Transverse colon (tissue), 4 donors: ENCODE measurements at regions of chr12 and their contacts with region 1.

Region 1: GRCh38 chr12:92649511-92650227 is 53.1 kb upstream of the PLEKHG7 start:
- DNase-seq: peak; percentile 55
- H3K4me3 ChIP-seq: no peak overlapping the region
- H3K27ac ChIP-seq: no peak overlapping the region
- H3K4me1 ChIP-seq: peaks cover 0 to 7% (median 0%) of the 10 kb centered on the region in 4 donors
- H3K27me3 ChIP-seq: no peaks in the 10 kb centered on the region
- CTCF ChIP-seq: peak; percentile 63 to 80 (median 65)
- EP300 ChIP-seq: no peak
- POLR2A ChIP-seq: no peak

Region 2: DNA sequence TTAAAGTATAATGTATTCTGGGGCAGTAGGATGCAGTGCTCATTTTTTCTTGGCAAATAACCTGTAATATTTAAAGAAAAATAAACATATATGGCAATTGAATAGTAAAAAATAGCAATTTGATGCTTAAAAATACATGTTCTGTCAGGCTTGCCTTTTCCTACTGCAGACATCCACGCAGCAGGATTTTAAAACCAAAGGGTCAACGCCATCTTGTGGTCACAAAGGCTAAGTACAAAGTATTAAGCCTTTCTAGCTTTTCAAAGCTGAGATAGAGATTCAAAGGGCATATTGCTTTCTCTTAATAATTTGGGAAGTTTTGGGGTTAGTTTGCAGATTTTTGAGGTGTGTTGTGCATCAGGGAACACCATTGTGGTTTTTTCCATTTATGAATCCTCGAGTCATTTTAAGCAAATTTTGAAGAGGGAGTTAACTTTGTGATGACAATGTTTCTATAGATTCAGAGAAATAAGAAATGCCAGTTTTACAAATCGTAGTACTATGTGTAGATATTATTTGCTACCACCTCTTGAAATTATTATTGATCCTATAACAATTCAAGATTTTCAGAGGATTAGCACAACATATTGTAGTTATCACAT is 1690.0 kb before region 1 on chr12:
- in situ Hi-C with region 1: loop called in 1 of 4 experiments (anchors 25 kb)
- intact Hi-C with region 1: no loop called
- DNase-seq: no peak
- H3K4me3 ChIP-seq: no peak overlapping the region
- H3K27ac ChIP-seq: no peak overlapping the region
- H3K4me1 ChIP-seq: no peaks in the 10 kb centered on the region
- H3K27me3 ChIP-seq: no peaks in the 10 kb centered on the region
- CTCF ChIP-seq: peak; percentile 30 to 66 (median 59)
- EP300 ChIP-seq: no peak
- POLR2A ChIP-seq: no peak

Region 3: GRCh38 chr12:91355150-91356006 is 1294.3 kb before region 1 on chr12:
- in situ Hi-C with region 1: loop called in 3 of 4 experiments (anchors 10 to 25 kb)
- intact Hi-C with region 1: loop called (anchors 10 kb)
- DNase-seq: peak; percentile 73
- H3K4me3 ChIP-seq: no peak overlapping the region
- H3K27ac ChIP-seq: no peak overlapping the region
- H3K4me1 ChIP-seq: peaks cover 0 to 18% (median 3%) of the 10 kb centered on the region in 4 donors
- H3K27me3 ChIP-seq: no peaks in the 10 kb centered on the region
- CTCF ChIP-seq: peak; percentile 79 to 87 (median 79)
- EP300 ChIP-seq: no peak
- POLR2A ChIP-seq: no peak

Region 4: DNA sequence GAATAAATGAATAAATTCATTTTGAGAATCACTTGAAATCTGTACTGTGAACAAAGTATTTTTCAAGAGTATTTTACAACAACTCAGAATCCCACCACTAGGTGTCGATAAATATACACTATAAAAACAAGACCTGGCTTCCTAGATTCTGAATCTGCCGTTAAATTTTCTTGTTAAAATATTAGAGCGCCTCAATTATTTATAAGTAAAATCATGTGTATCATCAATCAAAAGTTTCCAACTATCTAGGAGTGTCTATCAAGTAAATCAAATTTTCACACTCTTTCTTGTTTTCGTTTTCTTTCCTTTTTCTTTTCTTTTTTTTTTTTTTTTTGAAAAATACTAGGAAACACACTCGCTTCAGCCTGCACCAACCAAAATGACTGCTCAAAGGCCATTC is 1287.8 kb before region 1 on chr12:
- in situ Hi-C with region 1: loop called in 3 of 4 experiments (anchors 10 to 25 kb)
- intact Hi-C with region 1: loop called (anchors 10 kb)
- DNase-seq: no peak
- H3K4me3 ChIP-seq: peak overlapping the region in 1 of 4 donors; percentile 17
- H3K27ac ChIP-seq: no peak overlapping the region
- H3K4me1 ChIP-seq: peaks cover 0 to 18% (median 3%) of the 10 kb centered on the region in 4 donors
- H3K27me3 ChIP-seq: no peaks in the 10 kb centered on the region
- CTCF ChIP-seq: peak; percentile 70 to 76 (median 72)
- EP300 ChIP-seq: no peak
- POLR2A ChIP-seq: no peak

Region 5: DNA sequence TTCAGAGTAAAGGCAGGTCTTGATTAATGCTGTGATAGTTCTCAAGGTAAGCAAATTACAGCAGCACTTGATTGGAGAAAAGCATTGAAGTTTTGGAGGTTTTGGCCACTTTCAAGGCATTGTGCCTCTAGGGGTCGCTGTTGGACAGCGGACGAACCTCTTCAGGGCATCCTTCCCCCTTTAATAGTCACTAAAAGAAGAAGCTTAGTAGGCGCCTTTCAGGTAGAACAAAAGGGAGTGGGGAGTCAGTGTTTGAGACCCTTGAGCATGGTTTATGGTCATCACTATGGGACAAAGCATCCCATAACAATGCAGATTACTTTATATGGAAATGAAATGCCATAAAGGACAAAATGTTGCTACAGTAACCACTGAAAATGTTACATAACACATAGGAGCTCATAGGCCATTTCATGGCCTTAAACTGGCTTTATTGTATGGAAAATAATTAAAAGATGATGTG is 1267.6 kb before region 1 on chr12:
- in situ Hi-C with region 1: loop called in 1 of 4 experiments (anchors 10 kb)
- intact Hi-C with region 1: no loop called
- DNase-seq: peak; percentile 86
- H3K4me3 ChIP-seq: peak overlapping the region; percentile 7 to 40 (median 22)
- H3K27ac ChIP-seq: peak overlapping the region; percentile 53 to 71 (median 60)
- H3K4me1 ChIP-seq: peaks cover 0 to 27% (median 1%) of the 10 kb centered on the region in 4 donors
- H3K27me3 ChIP-seq: no peaks in the 10 kb centered on the region
- CTCF ChIP-seq: peak; percentile 83 to 94 (median 87)
- EP300 ChIP-seq: no peak
- POLR2A ChIP-seq: no peak

Region 6: DNA sequence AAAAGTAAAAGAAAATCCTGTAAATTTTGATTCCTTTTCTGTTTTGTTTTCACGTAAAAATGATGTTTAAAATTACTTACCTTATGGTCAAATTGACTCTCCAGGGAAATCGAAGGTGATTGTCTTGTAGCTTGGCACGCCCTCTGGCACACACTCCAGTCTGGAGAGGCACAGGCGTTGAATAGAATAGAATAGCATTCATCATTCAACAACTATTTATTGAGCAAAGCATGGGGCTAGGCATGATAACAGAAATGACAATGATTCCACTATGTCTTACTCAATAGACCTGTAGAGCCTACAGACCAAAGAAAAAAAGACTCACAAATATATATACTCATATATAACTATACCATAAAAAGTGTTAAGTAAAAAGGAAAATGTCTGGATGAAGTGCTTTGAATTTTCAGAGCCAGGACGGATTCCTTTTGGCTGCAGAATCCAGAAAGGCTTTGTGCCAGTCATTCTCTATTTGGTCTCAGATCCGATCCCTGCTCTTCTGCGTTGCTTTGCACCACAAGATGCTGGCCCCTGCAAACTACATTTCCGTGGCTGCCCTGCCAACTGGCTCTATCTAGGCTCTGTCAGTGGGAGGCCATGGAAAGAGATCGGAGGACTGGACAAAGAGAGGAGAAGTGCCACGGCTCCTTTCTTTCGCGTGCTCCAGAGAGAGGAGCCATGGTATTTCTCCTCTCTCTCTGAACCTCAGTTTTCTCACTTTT is 1259.3 kb after region 1 on chr12:
- in situ Hi-C with region 1: no loop called
- intact Hi-C with region 1: no loop called
- DNase-seq: peak; percentile 51
- H3K4me3 ChIP-seq: no peak overlapping the region
- H3K27ac ChIP-seq: no peak overlapping the region
- H3K4me1 ChIP-seq: no peaks in the 10 kb centered on the region
- H3K27me3 ChIP-seq: no peaks in the 10 kb centered on the region
- CTCF ChIP-seq: no peak
- EP300 ChIP-seq: no peak
- POLR2A ChIP-seq: no peak